Kidney (tissue), 22 donors: ENCODE measurements at regions of chr9 and their contacts with region 1.

Region 1: DNA sequence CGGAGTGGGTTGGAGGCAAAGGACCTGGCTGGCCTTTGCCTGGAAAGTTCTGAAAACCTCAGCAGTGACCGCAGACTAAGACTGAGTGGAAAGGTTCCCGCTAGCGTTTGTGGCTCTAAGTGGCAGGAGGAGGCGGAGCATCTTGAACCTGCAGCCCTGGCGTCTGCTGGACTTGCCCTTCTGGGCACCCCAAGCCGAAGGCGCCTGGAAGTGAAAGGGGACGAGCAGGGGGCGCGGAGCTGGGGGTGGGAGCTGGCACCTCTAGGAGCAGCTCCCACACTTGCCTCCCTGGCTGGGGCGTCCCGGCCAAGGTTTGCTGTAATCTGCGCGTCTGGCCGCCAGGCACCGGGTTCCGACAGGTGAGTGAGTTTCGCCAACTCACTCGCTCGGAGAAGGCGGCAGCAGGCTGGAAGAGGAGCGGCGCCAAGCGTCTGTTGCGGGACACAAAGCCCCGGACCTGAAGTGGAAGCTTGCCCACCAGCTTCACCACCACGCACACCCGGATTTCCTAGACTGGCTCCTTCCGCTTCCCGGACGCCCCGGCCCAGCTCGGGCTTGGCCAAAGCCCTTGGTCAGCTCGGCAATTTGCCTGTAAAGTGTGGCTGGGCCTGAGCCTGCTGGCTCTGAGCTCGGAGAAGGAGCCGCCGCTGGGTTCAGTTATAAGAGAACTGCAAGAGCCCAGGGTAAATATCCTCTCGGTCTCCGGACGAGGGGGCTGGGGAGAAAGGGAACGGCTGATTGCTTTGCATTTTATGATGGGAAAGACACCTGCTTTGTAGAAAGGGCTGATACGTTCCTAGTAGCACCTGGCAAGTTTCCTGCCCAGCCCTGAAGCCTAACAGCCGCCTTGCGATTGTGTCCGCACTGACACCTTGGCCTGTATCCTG is at the start of gene GNA14:
- DNase-seq: peak; percentile 45 to 87 (median 65)
- H3K4me3 ChIP-seq: peak within 1 kb of the TSS; percentile 30 to 78 (median 62)
- H3K27ac ChIP-seq: peak within 1 kb of the TSS; percentile 61 to 72
- H3K4me1 ChIP-seq: peaks cover 2 to 6% (median 4%) of the 10 kb centered on the region in 3 donors
- H3K27me3 ChIP-seq: peaks cover 5% of the 10 kb centered on the region
- CTCF ChIP-seq: no peak
- total RNA-seq, gene GNA14: 10.4 TPM

Region 2: DNA sequence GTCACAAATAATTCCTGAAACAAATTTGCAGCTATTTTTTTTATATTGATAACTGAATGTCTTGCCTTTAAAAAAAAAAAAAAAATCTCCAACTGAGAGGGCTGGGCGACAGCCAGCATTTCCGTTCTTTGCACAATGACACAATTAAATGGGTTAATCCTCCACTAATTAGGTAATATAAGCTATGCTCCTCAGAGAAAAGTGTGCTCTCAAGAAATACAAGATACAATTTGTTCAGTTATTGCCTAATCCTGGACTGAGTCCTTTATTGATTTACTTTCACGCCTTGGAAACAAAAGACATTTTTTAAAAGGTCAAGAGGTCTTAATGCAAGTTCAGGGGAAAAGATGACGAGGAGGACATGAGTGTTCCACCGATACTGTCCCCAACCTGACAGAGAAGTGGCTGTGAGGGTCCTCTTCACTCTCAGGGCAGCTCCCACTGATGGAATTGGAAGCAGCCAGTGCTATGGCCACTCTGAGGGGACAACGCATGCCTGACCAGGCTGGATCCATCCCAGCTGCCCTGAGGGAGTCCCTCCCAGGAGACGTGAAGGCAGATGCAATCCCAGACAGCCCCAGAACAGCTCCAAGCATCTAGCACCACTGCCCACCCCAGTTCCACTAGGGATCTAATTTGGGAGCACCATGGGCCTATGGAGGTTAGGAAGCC is 221.1 kb before region 1 on chr9:
- intact Hi-C with region 1: no loop called
- DNase-seq: no peak
- H3K4me3 ChIP-seq: no peak overlapping the region
- H3K27ac ChIP-seq: no peak overlapping the region
- H3K4me1 ChIP-seq: no peaks in the 10 kb centered on the region
- H3K27me3 ChIP-seq: no peaks in the 10 kb centered on the region
- CTCF ChIP-seq: no peak

Region 3: DNA sequence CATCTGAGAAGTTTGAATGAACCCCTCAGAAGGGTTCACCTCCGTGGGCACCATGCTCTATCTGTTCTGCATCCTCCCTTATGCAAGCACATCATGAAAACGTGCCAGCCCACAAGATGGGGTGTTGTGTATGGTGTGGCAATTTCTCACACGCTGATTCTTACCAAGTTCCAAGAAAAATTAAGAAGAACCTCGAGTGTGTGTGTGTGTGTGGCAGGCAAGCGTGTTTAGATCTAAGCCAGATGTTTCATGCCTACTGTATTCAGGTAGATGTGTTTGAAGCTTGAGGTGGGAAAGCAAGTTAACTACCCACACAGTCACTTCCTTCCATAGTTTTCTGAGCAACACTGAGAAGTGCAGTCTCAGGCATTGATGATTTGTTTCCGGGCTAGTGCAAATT is 77.3 kb after region 1 on chr9:
- intact Hi-C with region 1: loop called (anchors 10 kb)
- DNase-seq: no peak
- H3K4me3 ChIP-seq: no peak overlapping the region
- H3K27ac ChIP-seq: no peak overlapping the region
- H3K4me1 ChIP-seq: no peaks in the 10 kb centered on the region
- H3K27me3 ChIP-seq: no peaks in the 10 kb centered on the region
- CTCF ChIP-seq: no peak

Region 4: GRCh38 chr9:77793904-77794303 is 145.4 kb after region 1 on chr9:
- intact Hi-C with region 1: no loop called
- DNase-seq: peak in 1 of 5 donors; percentile 12
- H3K4me3 ChIP-seq: no peak overlapping the region
- H3K27ac ChIP-seq: no peak overlapping the region
- H3K4me1 ChIP-seq: no peaks in the 10 kb centered on the region
- H3K27me3 ChIP-seq: no peaks in the 10 kb centered on the region
- CTCF ChIP-seq: no peak

Region 5: GRCh38 chr9:77876091-77876490 is 227.6 kb after region 1 on chr9:
- intact Hi-C with region 1: no loop called
- DNase-seq: peak in 3 of 5 donors; percentile 22 to 68 (median 52)
- H3K4me3 ChIP-seq: no peak overlapping the region
- H3K27ac ChIP-seq: no peak overlapping the region
- H3K4me1 ChIP-seq: peaks cover 0 to 14% (median 4%) of the 10 kb centered on the region in 3 donors
- H3K27me3 ChIP-seq: no peaks in the 10 kb centered on the region
- CTCF ChIP-seq: no peak

Region 6: DNA sequence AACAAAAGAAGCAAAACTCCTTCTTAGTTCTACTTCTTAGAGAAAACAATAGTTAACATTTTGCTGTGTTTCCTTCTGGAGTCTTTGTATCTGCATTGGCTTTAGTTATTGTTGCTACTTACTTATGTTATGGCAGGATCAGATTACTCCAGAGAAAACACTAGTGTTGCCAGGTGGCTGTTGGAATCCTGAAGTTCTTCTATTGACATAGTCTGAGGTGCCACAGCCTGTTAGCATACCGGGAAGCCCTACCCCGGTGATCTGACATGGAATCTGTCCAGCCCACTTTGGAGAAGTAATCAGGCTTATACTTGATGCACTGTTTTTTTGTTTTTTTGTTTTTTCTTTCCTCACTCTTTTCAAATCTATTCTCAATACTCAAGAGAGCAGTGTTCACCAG is 518.9 kb after region 1 on chr9:
- intact Hi-C with region 1: no loop called
- DNase-seq: peak in 4 of 5 donors; percentile 45 to 83 (median 72)
- H3K4me3 ChIP-seq: no peak overlapping the region
- H3K27ac ChIP-seq: no peak overlapping the region
- H3K4me1 ChIP-seq: no peaks in the 10 kb centered on the region
- H3K27me3 ChIP-seq: no peaks in the 10 kb centered on the region
- CTCF ChIP-seq: no peak